ENCODE measurements at regions of chr10 and their contacts with region 1.

Region 1: GRCh38 chr10:104548090-104548489 is 93.0 kb upstream of the SORCS3 start:
- DNase-seq: no peak
- H3K4me3 ChIP-seq: no peak overlapping the region
- H3K27ac ChIP-seq: no peak overlapping the region
- H3K4me1 ChIP-seq: no peaks in the 10 kb centered on the region
- H3K27me3 ChIP-seq: no peaks in the 10 kb centered on the region
- CTCF ChIP-seq: no peak

Region 2: DNA sequence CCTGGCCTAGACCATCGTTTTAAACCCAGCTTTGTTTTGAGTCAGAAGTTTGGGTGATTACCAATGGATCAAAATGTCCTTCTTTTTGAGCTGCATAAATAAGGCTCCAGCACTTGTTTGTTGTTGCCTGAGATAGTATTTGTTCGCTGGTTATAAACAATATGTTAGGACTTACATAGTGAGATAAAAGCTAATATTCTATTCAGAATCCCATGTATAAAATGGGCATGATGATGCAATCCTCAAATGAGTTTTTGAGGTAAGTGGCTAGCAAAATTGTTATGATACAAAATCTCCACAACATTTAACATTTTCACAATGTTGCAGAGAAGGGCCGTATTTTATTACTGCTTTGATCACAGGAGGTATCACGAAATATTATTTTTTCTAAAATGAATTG is 364.4 kb before region 1 on chr10:
- CTCF ChIA-PET with region 1: no interaction called
- POLR2A ChIA-PET with region 1: interaction called, 10 read pairs
- intact Hi-C with region 1: no loop called
- DNase-seq: no peak
- H3K4me3 ChIP-seq: no peak overlapping the region
- H3K27ac ChIP-seq: no peak overlapping the region
- H3K4me1 ChIP-seq: no peaks in the 10 kb centered on the region
- H3K27me3 ChIP-seq: no peaks in the 10 kb centered on the region
- CTCF ChIP-seq: no peak

Region 3: DNA sequence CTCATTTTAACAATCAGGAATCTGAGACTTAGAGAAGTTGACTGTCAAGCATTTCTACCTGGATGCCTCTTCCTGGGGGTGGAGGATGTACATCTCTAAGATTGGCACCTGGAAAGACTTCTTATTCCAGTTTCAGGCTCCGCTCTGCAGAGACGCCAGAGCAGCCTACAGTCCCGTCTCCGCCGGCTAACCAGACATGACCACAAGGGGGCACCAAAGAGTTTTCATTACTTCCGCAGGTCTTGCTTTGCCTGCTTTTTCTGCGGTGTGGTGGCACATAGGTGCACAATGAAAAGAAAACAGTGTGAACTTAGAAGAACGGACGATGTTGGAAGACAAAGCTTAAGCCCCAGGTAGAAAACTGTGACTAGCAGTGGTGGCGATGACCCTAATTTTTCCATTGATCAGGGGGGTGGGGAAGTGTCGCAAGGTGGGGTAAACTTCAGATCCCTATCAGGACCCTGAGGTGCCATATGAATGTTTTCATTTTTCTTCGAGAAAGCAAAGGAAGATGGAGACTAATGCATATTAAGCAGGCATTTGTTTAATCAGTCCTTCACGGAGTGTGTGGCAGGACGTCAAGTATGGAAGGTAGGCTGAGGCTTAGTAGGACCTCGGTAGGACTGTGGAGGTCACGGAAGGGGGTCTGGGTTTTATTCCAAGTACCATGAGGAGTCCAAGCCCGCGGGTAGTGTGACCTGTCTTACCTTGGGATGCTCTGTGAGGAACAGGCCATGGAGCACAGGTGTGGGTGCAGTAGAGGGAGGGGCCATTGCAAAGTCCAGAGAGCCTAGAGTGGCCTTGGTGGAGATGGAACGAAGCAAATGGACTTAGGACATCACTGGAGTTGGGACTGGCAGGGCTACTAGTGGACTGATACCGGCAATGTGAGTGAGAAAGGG is 32.9 kb after region 1 on chr10:
- CTCF ChIA-PET with region 1: no interaction called
- POLR2A ChIA-PET with region 1: no interaction called
- intact Hi-C with region 1: no loop called
- DNase-seq: peak in 1 of 2 experiments; percentile 58
- H3K4me3 ChIP-seq: no peak overlapping the region
- H3K27ac ChIP-seq: no peak overlapping the region
- H3K4me1 ChIP-seq: no peaks in the 10 kb centered on the region
- H3K27me3 ChIP-seq: peaks cover 20% of the 10 kb centered on the region; the same call in 1 of the 2 replicates
- CTCF ChIP-seq: peak; percentile 71

Region 4: GRCh38 chr10:104666106-104666505 is 118.0 kb after region 1 on chr10:
- CTCF ChIA-PET with region 1: no interaction called
- POLR2A ChIA-PET with region 1: no interaction called
- intact Hi-C with region 1: no loop called
- DNase-seq: no peak
- H3K4me3 ChIP-seq: no peak overlapping the region
- H3K27ac ChIP-seq: no peak overlapping the region
- H3K4me1 ChIP-seq: no peaks in the 10 kb centered on the region
- H3K27me3 ChIP-seq: no peaks in the 10 kb centered on the region
- CTCF ChIP-seq: no peak

Measured in PC-9 (cell line).